ENCODE measurements at regions of chr1 and their contacts with region 1.

Region 1: GRCh38 chr1:110615548-110616492 is 9.7 kb upstream of the KCNA2 start:
- DNase-seq: peak in 1 of 2 donors; percentile 73
- H3K4me3 ChIP-seq: no peak overlapping the region
- H3K27ac ChIP-seq: no peak overlapping the region
- H3K4me1 ChIP-seq: peaks cover 0 to 4% of the 10 kb centered on the region in 2 donors
- H3K27me3 ChIP-seq: no peaks in the 10 kb centered on the region
- CTCF ChIP-seq: peak; percentile 65 to 75 (median 70)

Region 2: GRCh38 chr1:110524311-110525251 is 91.2 kb before region 1 on chr1:
- intact Hi-C with region 1: loop called (anchors 1 kb)
- DNase-seq: no peak
- H3K4me3 ChIP-seq: no peak overlapping the region
- H3K27ac ChIP-seq: no peak overlapping the region
- H3K4me1 ChIP-seq: no peaks in the 10 kb centered on the region
- H3K27me3 ChIP-seq: no peaks in the 10 kb centered on the region
- CTCF ChIP-seq: peak; percentile 25 to 62 (median 41)

Region 3: DNA sequence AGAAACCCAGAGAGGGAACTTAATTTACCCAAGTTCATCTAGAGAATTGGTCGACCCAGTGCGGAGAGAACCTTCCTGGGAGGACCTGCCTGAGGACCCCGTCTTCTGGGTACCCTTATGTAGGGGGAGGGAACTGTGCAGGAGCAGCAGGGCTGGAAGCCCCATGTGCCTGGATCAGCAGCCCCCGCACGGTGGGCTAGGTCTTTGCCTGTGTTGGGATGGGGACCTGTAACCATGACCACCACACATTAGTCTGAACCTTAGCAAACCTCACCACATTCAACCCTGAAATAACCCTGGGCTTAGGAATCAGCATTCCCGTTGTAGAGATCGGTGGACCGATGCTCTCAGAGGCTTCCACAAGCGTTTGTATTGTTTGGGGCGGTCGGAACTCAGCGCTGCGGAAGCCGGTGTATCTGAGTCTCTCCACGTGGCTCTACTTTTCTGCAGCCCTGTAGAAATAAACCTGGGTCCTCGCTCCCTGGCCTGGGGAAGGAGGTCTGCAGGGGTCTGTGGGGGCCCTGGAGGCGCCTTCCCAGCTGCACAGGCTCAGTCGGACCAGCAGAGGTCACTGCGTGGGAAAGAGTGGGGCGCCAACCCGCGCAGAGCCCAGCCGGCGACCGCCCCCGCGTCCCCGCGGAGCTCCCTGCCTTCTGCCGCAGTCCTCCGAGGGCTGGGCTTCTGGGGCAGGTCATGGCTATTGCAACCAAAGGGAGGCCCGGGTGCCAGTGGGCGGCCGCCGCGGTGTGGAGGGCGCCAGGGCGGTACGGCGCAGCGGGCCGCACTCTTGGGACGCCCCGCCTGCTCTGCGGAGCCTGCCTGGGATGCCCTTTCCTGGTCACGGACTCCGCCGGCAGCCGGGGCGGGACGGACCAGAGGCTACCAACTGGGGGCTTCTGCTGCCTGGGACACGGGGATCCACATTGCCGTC is 60.7 kb before region 1 on chr1:
- intact Hi-C with region 1: loop called (anchors 1 kb)
- DNase-seq: peak in 1 of 2 donors; percentile 77
- H3K4me3 ChIP-seq: peak overlapping the region; percentile 50 to 59
- H3K27ac ChIP-seq: peak overlapping the region in 1 of 2 donors; percentile 41
- H3K4me1 ChIP-seq: peaks cover 0 to 5% of the 10 kb centered on the region in 2 donors
- H3K27me3 ChIP-seq: no peaks in the 10 kb centered on the region
- CTCF ChIP-seq: peak; percentile 61 to 75 (median 70)

Region 4: GRCh38 chr1:110602466-110602865 is 13.4 kb before region 1 on chr1:
- intact Hi-C with region 1: no loop called
- DNase-seq: no peak
- H3K4me3 ChIP-seq: no peak overlapping the region
- H3K27ac ChIP-seq: no peak overlapping the region
- H3K4me1 ChIP-seq: peaks cover 6 to 9% of the 10 kb centered on the region in 2 donors
- H3K27me3 ChIP-seq: no peaks in the 10 kb centered on the region
- CTCF ChIP-seq: no peak